ENCODE measurements at regions of chr2 and their contacts with region 1.

Region 1: DNA sequence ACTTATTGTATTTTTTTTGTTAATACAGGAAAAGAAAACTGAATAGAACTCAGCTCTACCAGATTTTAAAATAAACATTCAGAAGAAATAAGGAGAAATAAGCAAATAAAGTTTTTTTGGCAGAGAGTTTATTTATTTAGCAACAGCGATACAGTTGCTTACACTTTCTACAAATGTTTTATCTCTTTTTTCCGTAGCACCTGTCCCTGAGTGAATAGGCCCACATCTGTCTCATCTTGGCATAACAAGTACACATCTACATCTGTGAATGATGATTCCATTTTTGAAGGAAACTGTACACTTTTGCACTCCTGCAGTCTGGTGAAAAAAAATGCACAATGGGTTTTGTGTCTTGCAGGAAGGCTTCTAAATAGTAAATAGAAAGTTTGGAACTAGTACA is 783.6 kb upstream of the ZEB2 start:
- DNase-seq: peak; percentile 16
- H3K4me3 ChIP-seq: no peak overlapping the region
- H3K27ac ChIP-seq: no peak overlapping the region
- H3K4me1 ChIP-seq: peaks cover 7% of the 10 kb centered on the region
- CTCF ChIP-seq: 0 out of 2 replicates have a peak, but pooled peaks have one; percentile 11

Region 2: DNA sequence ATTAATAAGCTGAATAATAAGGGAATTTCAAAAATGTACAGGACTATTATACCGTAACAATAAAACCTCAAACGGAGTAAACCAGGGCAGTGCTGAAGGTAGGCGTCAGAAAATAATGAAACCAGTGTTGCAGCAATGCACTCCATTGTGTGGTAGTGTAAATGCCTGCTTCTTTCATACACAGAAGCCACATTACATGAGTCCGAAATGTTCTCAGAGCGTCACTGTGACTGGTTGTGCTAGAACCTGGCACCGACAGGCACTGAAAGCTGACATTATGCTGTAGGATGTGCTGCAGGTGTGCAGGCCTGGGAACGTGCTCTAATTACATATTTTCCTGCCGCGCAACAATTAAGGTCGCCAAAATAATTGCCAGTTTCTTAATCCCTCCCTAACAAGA is 836.9 kb before region 1 on chr2:
- CTCF ChIA-PET with region 1: no interaction called
- POLR2A ChIA-PET with region 1: no interaction called
- intact Hi-C with region 1: no loop called
- DNase-seq: no peak
- H3K4me3 ChIP-seq: no peak overlapping the region
- H3K27ac ChIP-seq: no peak overlapping the region
- H3K4me1 ChIP-seq: peaks cover 9% of the 10 kb centered on the region
- CTCF ChIP-seq: no peak

Region 3: GRCh38 chr2:144479138-144479537 is 824.4 kb before region 1 on chr2:
- CTCF ChIA-PET with region 1: no interaction called
- POLR2A ChIA-PET with region 1: no interaction called
- intact Hi-C with region 1: no loop called
- DNase-seq: no peak
- H3K4me3 ChIP-seq: no peak overlapping the region
- H3K27ac ChIP-seq: no peak overlapping the region
- H3K4me1 ChIP-seq: peaks cover 12% of the 10 kb centered on the region
- CTCF ChIP-seq: no peak

Region 4: GRCh38 chr2:145287736-145288135 is 15.8 kb before region 1 on chr2:
- CTCF ChIA-PET with region 1: interaction called, 3 read pairs
- POLR2A ChIA-PET with region 1: interaction called, 11 read pairs
- intact Hi-C with region 1: no loop called
- DNase-seq: no peak
- H3K4me3 ChIP-seq: no peak overlapping the region
- H3K27ac ChIP-seq: no peak overlapping the region
- H3K4me1 ChIP-seq: peaks cover 5% of the 10 kb centered on the region
- CTCF ChIP-seq: no peak

Region 5: DNA sequence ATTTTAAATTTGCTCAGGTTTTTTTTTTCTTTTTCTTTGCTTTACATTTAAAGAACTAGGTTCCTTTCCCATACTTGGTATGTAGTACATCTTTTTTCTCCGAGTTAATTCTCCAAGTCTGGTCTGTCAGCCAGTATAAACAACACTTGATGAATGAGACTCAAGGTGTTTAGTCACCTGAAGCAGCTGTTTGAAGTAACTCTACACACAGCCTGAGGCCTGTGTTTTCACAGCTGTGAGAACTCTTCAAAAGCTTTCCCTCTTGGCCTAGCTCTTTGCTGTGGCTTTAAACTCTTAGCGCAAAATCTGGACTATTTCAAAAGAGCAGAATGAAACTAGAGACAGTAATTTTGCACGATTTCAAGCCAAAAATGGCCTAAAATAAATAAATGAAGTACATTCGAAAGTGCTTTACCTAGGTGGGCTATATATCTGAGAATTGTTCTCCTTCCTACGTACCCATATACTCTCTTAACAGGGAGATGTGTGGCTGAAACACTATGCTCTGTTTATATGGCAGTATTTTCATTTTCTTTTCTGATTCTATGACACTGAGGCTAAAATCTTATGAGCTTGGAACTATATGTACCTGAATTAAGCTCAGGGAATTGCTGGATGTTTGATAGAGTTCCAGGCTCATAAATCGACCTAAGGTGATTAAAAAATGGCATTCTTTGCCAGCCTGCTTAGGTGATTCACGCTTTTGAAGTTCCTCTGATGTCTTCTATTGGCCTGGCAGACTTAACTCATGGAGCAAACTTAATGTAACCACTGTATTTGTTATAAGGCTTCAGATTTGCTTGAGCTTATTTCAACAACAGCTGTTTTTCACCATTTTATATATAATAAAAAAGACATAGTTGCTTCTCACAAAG is 260.4 kb after region 1 on chr2:
- CTCF ChIA-PET with region 1: no interaction called
- POLR2A ChIA-PET with region 1: no interaction called
- intact Hi-C with region 1: no loop called
- DNase-seq: no peak
- H3K4me3 ChIP-seq: no peak overlapping the region
- H3K27ac ChIP-seq: no peak overlapping the region
- H3K4me1 ChIP-seq: no peaks in the 10 kb centered on the region
- CTCF ChIP-seq: no peak